ENCODE measurements at regions of chr11 and their contacts with region 1.

Region 1: DNA sequence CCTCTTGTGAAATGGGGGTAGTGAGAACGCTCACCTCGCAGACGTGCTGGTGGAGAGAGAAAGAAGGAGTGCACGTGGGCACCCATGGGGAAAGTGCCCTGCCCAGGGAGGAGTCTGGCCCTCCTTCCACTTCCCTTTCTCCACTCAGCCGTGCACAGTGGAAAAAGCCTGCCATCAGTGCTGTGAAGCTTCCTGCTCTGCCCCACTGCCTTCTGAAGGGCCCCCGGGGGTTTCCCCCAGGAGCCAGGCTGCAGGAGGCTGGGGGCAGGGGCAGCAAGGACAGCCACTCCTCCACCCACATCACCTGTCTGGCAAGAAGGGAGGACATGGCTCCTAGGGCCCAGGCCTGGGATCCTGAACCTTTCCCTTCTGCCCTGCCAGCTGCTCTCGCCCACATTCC is 7.6 kb downstream of the TP53I11 start:
- DNase-seq: no peak
- H3K4me3 ChIP-seq: no peak overlapping the region
- H3K27ac ChIP-seq: peak overlapping the region in 1 of 2 donors; percentile 90
- H3K4me1 ChIP-seq: peaks cover 0 to 8% of the 10 kb centered on the region in 2 donors
- H3K27me3 ChIP-seq: no peaks in the 10 kb centered on the region
- CTCF ChIP-seq: no peak
- POLR2A ChIP-seq: no peak

Region 2: GRCh38 chr11:45097721-45098493 is 154.8 kb after region 1 on chr11:
- intact Hi-C with region 1: loop called (anchors 5 kb)
- DNase-seq: peak; percentile 63 to 81
- H3K4me3 ChIP-seq: no peak overlapping the region
- H3K27ac ChIP-seq: no peak overlapping the region
- H3K4me1 ChIP-seq: no peaks in the 10 kb centered on the region
- H3K27me3 ChIP-seq: no peaks in the 10 kb centered on the region
- CTCF ChIP-seq: peak in 1 of 3 donors; percentile 38
- POLR2A ChIP-seq: no peak